Calu3 (cell line): ENCODE measurements at regions of chr1 and their contacts with region 1.

Region 1: GRCh38 chr1:40338745-40339424 is 21.8 kb upstream of the COL9A2 start:
- DNase-seq: peak; percentile 89
- H3K4me3 Mint-ChIP-seq: peak overlapping the region; percentile 22
- H3K27ac Mint-ChIP-seq: no peak overlapping the region
- H3K4me1 Mint-ChIP-seq: peaks cover 16% of the 10 kb centered on the region
- H3K27me3 Mint-ChIP-seq: peaks cover 40% of the 10 kb centered on the region
- CTCF ChIP-seq: peak; percentile 93

Region 2: GRCh38 chr1:40078512-40079333 is 260.2 kb before region 1 on chr1:
- CTCF ChIA-PET with region 1: interaction called, 16 read pairs
- intact Hi-C with region 1: loop called (anchors 5 kb)
- DNase-seq: peak; percentile 76
- H3K4me3 Mint-ChIP-seq: no peak overlapping the region
- H3K27ac Mint-ChIP-seq: no peak overlapping the region
- H3K4me1 Mint-ChIP-seq: no peaks in the 10 kb centered on the region
- H3K27me3 Mint-ChIP-seq: no peaks in the 10 kb centered on the region
- CTCF ChIP-seq: peak; percentile 72

Region 3: DNA sequence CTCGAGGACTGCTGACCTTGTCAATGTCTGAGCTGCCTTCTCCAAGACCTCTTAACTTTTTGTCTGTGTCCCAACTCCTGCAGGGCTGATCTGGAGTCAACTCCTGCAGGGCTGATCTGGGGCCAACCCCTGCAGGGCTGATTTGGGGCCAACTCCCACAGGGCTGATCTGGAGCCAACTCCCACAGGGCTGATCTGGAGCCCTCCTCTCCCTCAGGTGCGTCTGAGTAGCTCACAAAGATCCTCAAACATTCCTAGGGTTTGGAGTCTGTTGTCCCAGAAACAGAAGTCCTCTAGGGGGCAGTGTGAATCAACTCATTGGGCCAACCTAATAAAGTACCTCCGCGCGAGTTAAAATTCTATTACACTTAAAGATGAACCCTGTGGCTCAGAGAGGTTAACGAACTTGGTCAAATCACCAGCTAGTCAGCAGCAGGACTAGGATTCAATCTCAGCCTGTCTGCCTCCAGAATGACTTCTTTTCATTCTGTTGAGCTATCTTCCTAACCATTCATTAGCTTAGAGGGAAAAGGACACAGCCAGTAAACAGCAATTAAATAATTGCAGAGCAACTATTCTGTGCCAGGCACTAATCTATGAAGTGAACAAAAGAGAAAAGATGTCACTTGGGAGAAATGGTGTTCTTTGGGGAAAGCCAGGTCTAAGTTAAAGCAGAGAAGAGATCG is 194.9 kb before region 1 on chr1:
- CTCF ChIA-PET with region 1: interaction called, 27 read pairs
- intact Hi-C with region 1: loop called (anchors 2 kb)
- DNase-seq: peak; percentile 73
- H3K4me3 Mint-ChIP-seq: no peak overlapping the region
- H3K27ac Mint-ChIP-seq: no peak overlapping the region
- H3K4me1 Mint-ChIP-seq: peaks cover 39% of the 10 kb centered on the region
- H3K27me3 Mint-ChIP-seq: peaks cover 46% of the 10 kb centered on the region
- CTCF ChIP-seq: peak; percentile 73

Region 4: DNA sequence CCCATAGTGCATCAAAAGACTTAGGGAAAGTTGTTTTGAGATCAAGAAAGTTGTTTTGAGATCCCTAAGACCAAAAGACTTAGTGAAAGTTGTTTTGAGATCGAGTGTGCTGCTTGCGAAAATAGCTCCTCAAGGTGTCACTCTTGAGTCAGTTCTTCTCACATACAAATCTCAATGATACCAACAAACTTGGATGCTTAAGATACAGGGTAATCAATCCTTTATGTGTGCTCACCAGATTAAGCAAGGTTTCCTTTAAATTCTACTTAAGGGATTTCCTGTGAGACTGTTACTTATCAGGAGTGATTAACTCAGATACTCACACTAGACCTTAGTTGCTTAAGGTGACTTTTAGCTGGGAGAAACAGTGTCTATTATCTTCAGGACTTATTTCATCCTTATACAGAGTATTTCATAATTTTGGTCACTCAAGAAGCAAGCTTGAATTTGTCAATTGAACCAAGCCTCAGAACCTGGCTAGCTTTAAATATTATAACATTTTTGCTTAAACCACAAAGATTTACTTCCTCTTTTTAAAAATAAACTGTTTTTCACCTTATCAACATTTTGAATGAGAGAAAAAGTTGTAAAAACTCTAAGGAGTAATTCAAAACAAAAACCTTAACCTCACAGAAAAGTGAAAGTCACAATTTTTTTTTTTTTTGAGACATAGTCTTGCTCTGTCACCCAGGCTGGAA is 185.7 kb before region 1 on chr1:
- CTCF ChIA-PET with region 1: interaction called, 20 read pairs
- intact Hi-C with region 1: loop called (anchors 2 kb)
- DNase-seq: no peak
- H3K4me3 Mint-ChIP-seq: no peak overlapping the region
- H3K27ac Mint-ChIP-seq: no peak overlapping the region
- H3K4me1 Mint-ChIP-seq: no peaks in the 10 kb centered on the region
- H3K27me3 Mint-ChIP-seq: peaks cover 4% of the 10 kb centered on the region
- CTCF ChIP-seq: peak; percentile 52

Region 5: GRCh38 chr1:40315239-40315794 is 23.6 kb before region 1 on chr1:
- CTCF ChIA-PET with region 1: interaction called, 10 read pairs
- intact Hi-C with region 1: no loop called
- DNase-seq: peak; percentile 80
- H3K4me3 Mint-ChIP-seq: peak overlapping the region; percentile 78
- H3K27ac Mint-ChIP-seq: no peak overlapping the region
- H3K4me1 Mint-ChIP-seq: peaks cover 13% of the 10 kb centered on the region
- H3K27me3 Mint-ChIP-seq: peaks cover 44% of the 10 kb centered on the region
- CTCF ChIP-seq: peak; percentile 96

Region 6: GRCh38 chr1:40404670-40405462 is 66.0 kb after region 1 on chr1:
- CTCF ChIA-PET with region 1: interaction called, 24 read pairs
- intact Hi-C with region 1: loop called (anchors 2 kb)
- DNase-seq: peak; percentile 43
- H3K4me3 Mint-ChIP-seq: no peak overlapping the region
- H3K27ac Mint-ChIP-seq: no peak overlapping the region
- H3K4me1 Mint-ChIP-seq: peaks cover 6% of the 10 kb centered on the region
- H3K27me3 Mint-ChIP-seq: no peaks in the 10 kb centered on the region
- CTCF ChIP-seq: peak; percentile 64

Region 7: DNA sequence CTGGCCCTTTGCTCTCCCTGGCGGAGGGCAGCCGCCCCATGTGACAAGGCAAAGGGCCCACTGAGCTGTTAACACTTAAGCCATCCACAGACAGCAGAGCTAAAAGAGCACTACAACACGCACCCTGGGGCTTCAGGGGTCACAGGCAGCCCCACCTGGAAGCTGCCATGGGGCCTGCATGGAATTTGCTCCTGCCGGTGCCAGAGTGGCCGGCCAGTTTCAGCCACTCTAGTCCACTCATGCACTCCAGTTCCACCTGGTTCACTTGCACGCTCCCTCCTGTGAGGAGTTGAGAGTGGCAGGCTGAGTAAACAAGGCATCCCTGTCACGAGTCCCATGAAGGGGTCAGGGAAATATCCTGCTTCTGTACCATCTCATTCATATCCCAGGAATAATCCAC is 271.3 kb after region 1 on chr1:
- CTCF ChIA-PET with region 1: no interaction called
- intact Hi-C with region 1: no loop called
- DNase-seq: no peak
- H3K4me3 Mint-ChIP-seq: no peak overlapping the region
- H3K27ac Mint-ChIP-seq: no peak overlapping the region
- H3K4me1 Mint-ChIP-seq: no peaks in the 10 kb centered on the region
- H3K27me3 Mint-ChIP-seq: peaks cover 39% of the 10 kb centered on the region
- CTCF ChIP-seq: no peak